Naive thymus-derived CD4-positive, alpha-beta T cell (primary cell): ENCODE measurements at regions of chrX and their contacts with region 1.

Region 1: DNA sequence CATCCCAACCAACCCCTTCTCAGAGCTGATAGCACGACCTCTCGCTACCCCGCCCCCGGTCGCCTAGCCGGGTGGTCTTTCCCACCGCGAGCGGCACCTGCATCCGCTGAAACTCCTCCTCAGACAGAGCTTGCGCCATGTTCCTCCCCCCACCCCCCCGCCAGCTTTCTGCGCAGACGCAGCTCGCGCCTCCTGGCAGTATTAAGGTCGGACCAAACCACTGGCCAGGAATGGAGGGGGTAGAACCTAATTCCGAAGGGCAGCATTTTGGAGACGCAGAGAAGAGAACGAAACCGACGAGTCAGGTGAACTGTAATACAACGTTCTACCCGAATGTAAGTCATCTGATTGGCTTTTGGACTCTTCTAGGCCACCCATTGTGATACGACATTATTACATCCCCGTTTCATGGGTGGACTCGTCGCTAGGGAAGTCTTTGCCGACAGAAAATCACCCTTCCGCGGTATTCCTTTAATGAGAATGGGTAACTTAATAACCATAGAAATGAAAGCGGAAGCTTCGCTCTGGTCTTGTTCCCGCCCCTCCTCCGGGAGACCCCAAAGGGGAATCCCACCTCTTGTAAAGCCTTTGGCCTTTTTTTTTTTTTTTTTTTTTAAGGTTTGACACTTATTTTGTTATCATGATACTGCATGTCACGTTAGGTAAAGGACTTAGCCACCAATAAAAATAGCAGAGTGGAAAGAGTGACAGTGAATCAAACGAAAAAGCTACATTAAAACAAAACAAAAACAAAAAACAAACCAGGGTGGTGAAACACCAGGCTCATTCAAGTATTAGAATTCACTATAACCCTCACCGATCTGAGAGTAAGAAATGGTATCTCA is at the start of gene GRIPAP1:
- DNase-seq: peak; percentile 61 to 87 (median 79)
- ATAC-seq: peak; percentile 88
- H3K4me3 ChIP-seq: peak within 1 kb of the TSS; percentile 97
- H3K4me3 Mint-ChIP-seq: peak within 1 kb of the TSS; percentile 94 to 99 (median 98)
- H3K27ac ChIP-seq: peak within 1 kb of the TSS; percentile 97
- H3K27ac Mint-ChIP-seq: peak within 1 kb of the TSS; percentile 92 to 100 (median 98)
- H3K4me1 ChIP-seq: peaks cover 9 to 10% of the 10 kb centered on the region in 2 donors
- H3K4me1 Mint-ChIP-seq: peaks cover 7 to 43% (median 32%) of the 10 kb centered on the region in 7 donors
- H3K27me3 ChIP-seq: no peaks in the 10 kb centered on the region
- H3K27me3 Mint-ChIP-seq: no peaks in the 10 kb centered on the region
- total RNA-seq, gene GRIPAP1: 103 to 108 (median 105) TPM

Region 2: DNA sequence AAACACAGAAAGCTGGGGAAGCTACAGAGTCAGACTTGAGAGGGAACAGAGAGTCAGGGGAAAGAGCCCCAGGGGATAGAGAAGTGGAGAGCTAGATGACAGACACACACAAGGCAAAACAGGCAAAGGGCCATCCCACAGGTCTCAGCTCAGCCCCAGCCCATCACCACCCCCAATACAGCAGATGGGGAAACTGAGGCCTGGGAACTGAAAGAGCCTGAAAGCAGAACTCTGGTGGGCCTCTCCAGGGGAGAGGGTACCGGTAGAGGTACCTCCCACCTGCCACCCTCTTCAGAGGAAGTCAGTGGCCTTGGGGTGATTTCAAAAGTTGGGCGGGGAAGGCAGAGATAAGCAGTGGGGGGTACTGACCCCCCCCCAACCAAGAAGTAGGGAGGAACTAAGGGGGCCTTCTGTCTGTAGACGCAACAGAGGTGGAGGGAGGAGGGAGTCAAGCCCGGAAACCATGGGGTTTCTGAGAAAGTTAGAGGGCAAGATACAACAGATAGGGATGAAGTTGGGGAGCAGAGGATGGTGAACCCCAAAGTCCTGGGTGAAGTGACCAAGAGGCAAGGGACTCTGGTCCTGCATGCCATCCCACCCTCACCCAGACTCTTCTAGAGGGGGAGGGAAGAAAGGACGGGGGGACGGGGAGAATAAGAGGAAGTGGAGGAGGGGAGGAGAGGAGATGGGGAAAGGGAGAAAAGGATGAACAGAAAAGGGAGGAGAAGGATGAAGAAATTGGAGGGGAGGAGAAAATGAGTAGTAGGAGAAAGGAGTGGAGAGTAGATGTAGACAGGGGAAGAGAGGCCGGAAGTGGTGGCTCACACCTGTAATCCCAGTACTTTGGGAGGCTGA is 212.7 kb before region 1 on chrX:
- CTCF ChIA-PET with region 1: no interaction called
- POLR2A ChIA-PET with region 1: no interaction called
- intact Hi-C with region 1: no loop called
- DNase-seq: no peak
- ATAC-seq: peak; percentile 72
- H3K4me3 ChIP-seq: no peak overlapping the region
- H3K4me3 Mint-ChIP-seq: peak overlapping the region in 1 of 10 donors; percentile 38
- H3K27ac ChIP-seq: no peak overlapping the region
- H3K27ac Mint-ChIP-seq: peak overlapping the region in 3 of 9 donors; percentile 32 to 63 (median 38)
- H3K4me1 ChIP-seq: no peaks in the 10 kb centered on the region
- H3K4me1 Mint-ChIP-seq: peaks cover 0 to 17% (median 12%) of the 10 kb centered on the region in 7 donors
- H3K27me3 ChIP-seq: no peaks in the 10 kb centered on the region
- H3K27me3 Mint-ChIP-seq: peaks cover 0 to 19% (median 0%) of the 10 kb centered on the region in 5 donors

Region 3: DNA sequence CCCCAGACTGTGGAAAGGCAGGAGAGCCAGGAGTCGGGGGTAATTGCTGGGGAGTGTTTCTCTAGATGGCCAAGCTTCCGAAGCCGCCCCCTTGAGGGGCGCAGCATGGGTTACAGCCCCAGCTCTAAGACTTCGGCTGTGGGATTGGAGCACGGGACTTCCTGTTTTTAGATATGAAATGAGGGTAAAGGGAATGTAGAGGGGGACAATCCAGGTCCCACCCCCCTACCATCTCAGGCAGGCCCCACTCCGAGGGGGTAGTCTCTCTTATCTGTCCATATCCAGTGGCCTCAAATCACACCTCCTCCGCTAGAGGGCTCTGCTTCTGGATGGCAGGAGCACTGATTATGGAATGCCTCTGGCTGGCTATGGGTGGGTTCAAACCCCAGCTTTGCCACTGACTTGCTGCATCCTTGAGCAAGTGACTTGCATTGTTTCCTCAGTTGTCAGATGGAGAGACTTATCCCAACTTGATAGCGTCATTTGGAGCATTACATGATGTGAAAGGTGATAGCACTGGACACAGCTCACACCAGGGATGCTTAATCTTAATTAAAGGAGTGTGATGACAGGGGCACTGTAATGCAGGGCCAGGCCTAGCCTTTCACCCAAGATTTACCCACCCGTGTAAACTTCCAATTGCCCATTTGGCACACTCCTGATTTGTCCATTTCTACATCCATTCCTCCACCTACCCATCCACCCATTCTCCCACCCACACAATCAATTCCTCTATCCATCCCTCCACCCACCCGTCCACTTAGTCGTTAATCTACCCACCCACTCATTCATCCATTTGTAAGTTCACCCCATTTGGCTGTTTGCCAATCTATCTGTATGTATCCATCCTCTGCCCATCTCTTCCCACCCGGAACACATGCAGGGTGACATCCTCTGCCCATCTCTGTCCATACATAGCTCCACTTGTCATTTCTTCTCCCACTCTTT is 29.8 kb before region 1 on chrX:
- CTCF ChIA-PET with region 1: no interaction called
- POLR2A ChIA-PET with region 1: interaction called, 14 read pairs
- intact Hi-C with region 1: no loop called
- DNase-seq: peak in 4 of 9 donors; percentile 17 to 28 (median 22)
- ATAC-seq: peak; percentile 74
- H3K4me3 ChIP-seq: peak overlapping the region; percentile 30
- H3K4me3 Mint-ChIP-seq: peak overlapping the region in 9 of 10 donors; percentile 12 to 72 (median 57)
- H3K27ac ChIP-seq: no peak overlapping the region
- H3K27ac Mint-ChIP-seq: no peak overlapping the region
- H3K4me1 ChIP-seq: peaks cover 0 to 8% of the 10 kb centered on the region in 2 donors
- H3K4me1 Mint-ChIP-seq: peaks cover 6 to 17% (median 12%) of the 10 kb centered on the region in 7 donors
- H3K27me3 ChIP-seq: no peaks in the 10 kb centered on the region
- H3K27me3 Mint-ChIP-seq: no peaks in the 10 kb centered on the region

Region 4: GRCh38 chrX:48989483-48989882 is 12.8 kb before region 1 on chrX:
- CTCF ChIA-PET with region 1: no interaction called
- POLR2A ChIA-PET with region 1: no interaction called
- intact Hi-C with region 1: no loop called
- DNase-seq: no peak
- ATAC-seq: no peak
- H3K4me3 ChIP-seq: no peak overlapping the region
- H3K4me3 Mint-ChIP-seq: no peak overlapping the region
- H3K27ac ChIP-seq: no peak overlapping the region
- H3K27ac Mint-ChIP-seq: peak overlapping the region in 2 of 9 donors; percentile 15 to 85
- H3K4me1 ChIP-seq: no peaks in the 10 kb centered on the region
- H3K4me1 Mint-ChIP-seq: peaks cover 0 to 3% (median 0%) of the 10 kb centered on the region in 7 donors
- H3K27me3 ChIP-seq: no peaks in the 10 kb centered on the region
- H3K27me3 Mint-ChIP-seq: no peaks in the 10 kb centered on the region

Region 5: GRCh38 chrX:49100704-49101628 is 98.7 kb after region 1 on chrX:
- CTCF ChIA-PET with region 1: no interaction called
- POLR2A ChIA-PET with region 1: no interaction called
- intact Hi-C with region 1: loop called in 1 of 2 experiments (anchors 1 kb)
- DNase-seq: peak; percentile 75 to 90 (median 87)
- ATAC-seq: peak; percentile 97
- H3K4me3 ChIP-seq: peak overlapping the region; percentile 82
- H3K4me3 Mint-ChIP-seq: peak overlapping the region; percentile 80 to 93 (median 90)
- H3K27ac ChIP-seq: peak overlapping the region; percentile 78
- H3K27ac Mint-ChIP-seq: peak overlapping the region; percentile 74 to 95 (median 91)
- H3K4me1 ChIP-seq: no peaks in the 10 kb centered on the region
- H3K4me1 Mint-ChIP-seq: peaks cover 0 to 8% (median 0%) of the 10 kb centered on the region in 7 donors
- H3K27me3 ChIP-seq: no peaks in the 10 kb centered on the region
- H3K27me3 Mint-ChIP-seq: no peaks in the 10 kb centered on the region

Region 6: GRCh38 chrX:49155900-49156837 is 153.9 kb after region 1 on chrX:
- CTCF ChIA-PET with region 1: no interaction called
- POLR2A ChIA-PET with region 1: no interaction called
- intact Hi-C with region 1: loop called in 1 of 2 experiments (anchors 1 kb)
- DNase-seq: peak; percentile 75 to 87 (median 85)
- ATAC-seq: peak; percentile 97
- H3K4me3 ChIP-seq: peak overlapping the region; percentile 74
- H3K4me3 Mint-ChIP-seq: peak overlapping the region; percentile 93 to 99 (median 97)
- H3K27ac ChIP-seq: peak overlapping the region; percentile 91
- H3K27ac Mint-ChIP-seq: peak overlapping the region; percentile 89 to 99 (median 96)
- H3K4me1 ChIP-seq: peaks cover 0 to 6% of the 10 kb centered on the region in 2 donors
- H3K4me1 Mint-ChIP-seq: peaks cover 7 to 21% (median 13%) of the 10 kb centered on the region in 7 donors
- H3K27me3 ChIP-seq: no peaks in the 10 kb centered on the region
- H3K27me3 Mint-ChIP-seq: peaks cover 0 to 2% (median 0%) of the 10 kb centered on the region in 5 donors

Region 7: GRCh38 chrX:49618574-49618973 is 616.3 kb after region 1 on chrX:
- CTCF ChIA-PET with region 1: no interaction called
- POLR2A ChIA-PET with region 1: no interaction called
- intact Hi-C with region 1: no loop called
- DNase-seq: no peak
- ATAC-seq: no peak
- H3K4me3 ChIP-seq: no peak overlapping the region
- H3K4me3 Mint-ChIP-seq: no peak overlapping the region
- H3K27ac ChIP-seq: no peak overlapping the region
- H3K27ac Mint-ChIP-seq: peak overlapping the region in 1 of 9 donors; percentile 52
- H3K4me1 ChIP-seq: no peaks in the 10 kb centered on the region
- H3K4me1 Mint-ChIP-seq: no peaks in the 10 kb centered on the region
- H3K27me3 ChIP-seq: no peaks in the 10 kb centered on the region
- H3K27me3 Mint-ChIP-seq: no peaks in the 10 kb centered on the region

Region 8: GRCh38 chrX:50121093-50121492 is 1118.8 kb after region 1 on chrX:
- CTCF ChIA-PET with region 1: no interaction called
- POLR2A ChIA-PET with region 1: no interaction called
- intact Hi-C with region 1: no loop called
- DNase-seq: no peak
- ATAC-seq: no peak
- H3K4me3 ChIP-seq: no peak overlapping the region
- H3K4me3 Mint-ChIP-seq: no peak overlapping the region
- H3K27ac ChIP-seq: no peak overlapping the region
- H3K27ac Mint-ChIP-seq: no peak overlapping the region
- H3K4me1 ChIP-seq: no peaks in the 10 kb centered on the region
- H3K4me1 Mint-ChIP-seq: peaks cover 0 to 2% (median 0%) of the 10 kb centered on the region in 7 donors
- H3K27me3 ChIP-seq: no peaks in the 10 kb centered on the region
- H3K27me3 Mint-ChIP-seq: peaks cover 0 to 9% (median 6%) of the 10 kb centered on the region in 5 donors